ENCODE measurements at regions of chr17 and their contacts with region 1.

Region 1: GRCh38 chr17:76623271-76624146 is 20.0 kb downstream of the ST6GALNAC1 start:
- DNase-seq: no peak
- H3K4me3 ChIP-seq: no peak overlapping the region
- CTCF ChIP-seq: peak; percentile 88

Region 2: GRCh38 chr17:76458580-76459490 is 164.7 kb before region 1 on chr17:
- CTCF ChIA-PET with region 1: interaction called, 14 read pairs
- POLR2A ChIA-PET with region 1: no interaction called
- DNase-seq: no peak
- H3K4me3 ChIP-seq: no peak overlapping the region
- CTCF ChIP-seq: peak; percentile 87

Region 3: GRCh38 chr17:76506408-76507349 is 116.8 kb before region 1 on chr17:
- CTCF ChIA-PET with region 1: interaction called, 15 read pairs
- POLR2A ChIA-PET with region 1: no interaction called
- DNase-seq: no peak
- H3K4me3 ChIP-seq: no peak overlapping the region
- CTCF ChIP-seq: peak; percentile 91

Region 4: GRCh38 chr17:76523084-76524037 is 100.1 kb before region 1 on chr17:
- CTCF ChIA-PET with region 1: interaction called, 156 read pairs
- POLR2A ChIA-PET with region 1: no interaction called
- DNase-seq: no peak
- H3K4me3 ChIP-seq: peak overlapping the region; percentile 27; the same call in 1 of the 2 replicates
- CTCF ChIP-seq: peak; percentile 99

Region 5: GRCh38 chr17:76557368-76558197 is 65.9 kb before region 1 on chr17:
- CTCF ChIA-PET with region 1: interaction called, 123 read pairs
- POLR2A ChIA-PET with region 1: interaction called, 9 read pairs
- DNase-seq: peak; percentile 77
- H3K4me3 ChIP-seq: peak overlapping the region; percentile 96
- CTCF ChIP-seq: peak; percentile 86

Region 6: GRCh38 chr17:76585818-76586593 is 37.5 kb before region 1 on chr17 and contains the start of gene ST6GALNAC2:
- CTCF ChIA-PET with region 1: interaction called, 11 read pairs
- POLR2A ChIA-PET with region 1: no interaction called
- DNase-seq: no peak
- H3K4me3 ChIP-seq: peak within 1 kb of the TSS; percentile 48
- CTCF ChIP-seq: peak; percentile 17

Region 7: DNA sequence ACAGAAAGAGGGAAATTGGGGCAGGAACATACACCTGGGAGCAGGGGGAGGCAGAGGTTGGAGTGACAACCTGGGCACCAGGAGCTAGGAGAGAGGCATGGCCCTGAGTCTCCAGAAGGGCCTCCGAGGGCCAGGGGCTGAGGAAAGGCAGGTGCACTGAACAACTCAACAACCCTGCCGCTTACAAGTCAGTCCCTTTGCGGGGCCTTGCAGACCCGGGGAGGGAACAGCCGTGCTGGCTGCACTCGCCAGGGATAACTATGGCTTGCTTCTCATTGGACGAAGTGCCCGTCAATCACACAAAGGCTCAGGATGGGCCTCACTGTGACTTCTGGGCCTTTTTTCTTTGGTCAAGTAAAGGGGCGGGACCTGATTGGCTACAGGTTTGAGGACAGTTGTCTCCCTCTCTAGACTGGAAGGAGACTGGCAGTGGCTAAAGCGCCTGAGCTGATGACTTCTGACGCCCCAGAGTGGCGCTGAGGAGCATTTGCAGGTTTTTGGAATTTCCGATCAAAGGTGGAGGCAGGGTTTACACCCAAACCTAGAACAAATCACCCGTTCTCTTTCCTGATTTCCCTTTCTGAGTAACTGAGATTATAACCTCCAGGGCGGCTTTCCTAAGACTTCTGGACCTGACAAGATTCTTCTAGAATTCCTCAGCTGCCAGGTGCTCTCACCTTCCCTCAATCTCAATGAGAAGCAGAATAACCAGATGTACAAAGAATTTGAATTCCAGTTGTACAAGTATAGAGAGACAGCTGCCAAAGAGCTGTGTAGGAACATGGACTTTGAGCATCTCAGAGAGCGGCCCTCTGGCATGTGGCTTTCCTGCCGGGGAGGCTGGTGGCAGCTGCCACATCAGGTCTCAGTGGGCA is 10.3 kb before region 1 on chr17:
- CTCF ChIA-PET with region 1: interaction called, 63 read pairs
- POLR2A ChIA-PET with region 1: no interaction called
- DNase-seq: no peak
- H3K4me3 ChIP-seq: no peak overlapping the region
- CTCF ChIP-seq: no peak

Region 8: GRCh38 chr17:76772842-76773525 is 149.5 kb after region 1 on chr17:
- CTCF ChIA-PET with region 1: no interaction called
- POLR2A ChIA-PET with region 1: no interaction called
- DNase-seq: peak; percentile 58
- H3K4me3 ChIP-seq: peak overlapping the region; percentile 36
- CTCF ChIP-seq: no peak